ENCODE measurements at regions of chr1 and their contacts with region 1.

Region 1: GRCh38 chr1:41876576-41877445 is 41.9 kb downstream of the HIVEP3 start:
- DNase-seq: peak; percentile 24 to 46
- H3K4me3 ChIP-seq: no peak overlapping the region
- H3K27ac ChIP-seq: peak overlapping the region in 1 of 3 donors; percentile 4
- H3K4me1 ChIP-seq: peaks cover 15 to 36% of the 10 kb centered on the region in 2 donors
- H3K27me3 ChIP-seq: no peaks in the 10 kb centered on the region
- CTCF ChIP-seq: no peak
- POLR2A ChIP-seq: no peak

Region 2: DNA sequence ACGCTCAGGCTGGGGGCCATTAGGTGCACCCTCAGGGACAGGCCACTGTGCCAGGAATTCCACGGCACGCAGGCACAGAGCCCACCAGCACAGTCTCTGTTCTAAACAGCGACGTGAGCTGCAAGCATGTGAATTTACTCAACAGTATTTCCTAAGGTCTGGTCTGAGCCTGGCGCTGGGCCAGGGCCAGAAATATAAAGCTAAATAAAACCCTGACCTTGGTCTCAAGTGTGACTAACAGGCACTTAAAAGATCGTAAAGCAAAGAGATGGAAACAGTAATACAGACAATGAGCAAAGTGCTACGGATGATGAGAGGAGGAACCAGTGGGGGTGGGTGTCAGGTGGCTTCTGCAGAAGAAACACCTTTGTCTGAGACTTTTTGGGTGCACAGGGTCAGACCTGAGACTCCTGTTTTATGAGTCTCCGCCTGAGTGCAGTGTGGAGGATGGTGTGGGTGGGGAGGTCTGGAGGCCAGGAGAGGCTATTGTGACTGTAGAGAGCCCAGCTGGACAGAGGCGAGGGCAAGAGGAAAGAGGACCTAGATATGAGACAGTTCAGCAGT is 338.9 kb before region 1 on chr1:
- intact Hi-C with region 1: no loop called
- DNase-seq: peak; percentile 93
- H3K4me3 ChIP-seq: no peak overlapping the region
- H3K27ac ChIP-seq: peak overlapping the region; percentile 72 to 84 (median 83)
- H3K4me1 ChIP-seq: peaks cover 16 to 33% of the 10 kb centered on the region in 2 donors
- H3K27me3 ChIP-seq: no peaks in the 10 kb centered on the region
- CTCF ChIP-seq: peak in 1 of 6 experiments; percentile 2
- POLR2A ChIP-seq: no peak

Region 3: GRCh38 chr1:42075179-42075578 is 198.4 kb after region 1 on chr1:
- intact Hi-C with region 1: loop called (anchors 5 kb)
- DNase-seq: no peak
- H3K4me3 ChIP-seq: no peak overlapping the region
- H3K27ac ChIP-seq: no peak overlapping the region
- H3K4me1 ChIP-seq: no peaks in the 10 kb centered on the region
- H3K27me3 ChIP-seq: no peaks in the 10 kb centered on the region
- CTCF ChIP-seq: no peak
- POLR2A ChIP-seq: no peak

Measured in thyroid gland (tissue), 4 donors.